Breast epithelium (tissue), 4 donors: ENCODE measurements at regions of chr6 and their contacts with region 1.

Region 1: DNA sequence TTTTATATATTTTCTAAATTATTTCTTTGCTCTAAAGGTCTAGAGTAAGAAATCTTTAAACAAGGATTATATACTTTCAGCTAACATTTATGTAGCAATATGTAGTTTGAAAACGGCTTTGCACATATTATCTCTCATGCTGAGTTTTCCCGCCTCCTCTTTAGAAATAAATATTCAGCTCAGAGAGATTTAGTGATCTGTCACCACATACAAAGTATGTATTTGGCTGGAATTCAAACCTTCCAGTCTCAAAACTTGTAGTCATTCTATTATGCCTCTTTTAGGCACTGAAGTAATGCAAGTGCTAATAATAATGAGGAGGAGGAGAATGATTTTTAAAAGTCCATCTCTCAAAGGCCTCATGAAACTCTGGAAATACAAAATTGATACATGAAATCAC is 525.0 kb downstream of the GRIK2 start:
- DNase-seq: no peak
- H3K4me3 ChIP-seq: no peak overlapping the region
- H3K27ac ChIP-seq: no peak overlapping the region
- H3K4me1 ChIP-seq: no peaks in the 10 kb centered on the region
- H3K27me3 ChIP-seq: no peaks in the 10 kb centered on the region
- CTCF ChIP-seq: no peak
- POLR2A ChIP-seq: no peak

Region 2: GRCh38 chr6:101544286-101544685 is 374.2 kb before region 1 on chr6:
- intact Hi-C with region 1: no loop called
- DNase-seq: no peak
- H3K4me3 ChIP-seq: no peak overlapping the region
- H3K27ac ChIP-seq: no peak overlapping the region
- H3K4me1 ChIP-seq: no peaks in the 10 kb centered on the region
- H3K27me3 ChIP-seq: no peaks in the 10 kb centered on the region
- CTCF ChIP-seq: no peak
- POLR2A ChIP-seq: no peak

Region 3: GRCh38 chr6:101878554-101879276 is 39.8 kb before region 1 on chr6:
- intact Hi-C with region 1: no loop called
- DNase-seq: no peak
- H3K4me3 ChIP-seq: no peak overlapping the region
- H3K27ac ChIP-seq: no peak overlapping the region
- H3K4me1 ChIP-seq: no peaks in the 10 kb centered on the region
- H3K27me3 ChIP-seq: no peaks in the 10 kb centered on the region
- CTCF ChIP-seq: no peak
- POLR2A ChIP-seq: no peak

Region 4: GRCh38 chr6:102015431-102015830 is 97.0 kb after region 1 on chr6:
- intact Hi-C with region 1: loop called (anchors 10 kb)
- DNase-seq: no peak
- H3K4me3 ChIP-seq: no peak overlapping the region
- H3K27ac ChIP-seq: no peak overlapping the region
- H3K4me1 ChIP-seq: no peaks in the 10 kb centered on the region
- H3K27me3 ChIP-seq: no peaks in the 10 kb centered on the region
- CTCF ChIP-seq: no peak
- POLR2A ChIP-seq: no peak